ENCODE measurements at regions of chr2 and their contacts with region 1.

Region 1: GRCh38 chr2:197799068-197799467 is 5.3 kb upstream of the PLCL1 start:
- ATAC-seq: peak in 1 of 8 experiments; percentile 20
- H3K4me3 ChIP-seq: no peak overlapping the region
- H3K27ac ChIP-seq: no peak overlapping the region
- H3K4me1 ChIP-seq: peaks cover 13 to 36% of the 10 kb centered on the region in 2 donors

Region 2: GRCh38 chr2:198296665-198297308 is 497.7 kb after region 1 on chr2:
- in situ Hi-C with region 1: loop called in 8 of 9 experiments (anchors 5 to 25 kb)
- ATAC-seq: peak; percentile 82 to 100 (median 98)
- H3K4me3 ChIP-seq: no peak overlapping the region
- H3K27ac ChIP-seq: no peak overlapping the region
- H3K4me1 ChIP-seq: no peaks in the 10 kb centered on the region